ENCODE measurements at regions of chr6 and their contacts with region 1.

Region 1: GRCh38 chr6:160455541-160456213 is 107.5 kb downstream of the SLC22A3 start:
- DNase-seq: peak; percentile 49 to 93
- H3K4me3 ChIP-seq: no peak overlapping the region
- H3K27ac ChIP-seq: no peak overlapping the region
- H3K4me1 ChIP-seq: peaks cover 0 to 3% (median 0%) of the 10 kb centered on the region in 4 experiments; a peak in 2 of 7 replicates
- H3K27me3 ChIP-seq: no peaks in the 10 kb centered on the region
- CTCF ChIP-seq: peak; percentile 89 to 98 (median 98)
- EP300 ChIP-seq: no peak
- POLR2A ChIP-seq: no peak
- RAD21 ChIP-seq: peak; percentile 99 to 100

Region 2: GRCh38 chr6:160088069-160088783 is 367.5 kb before region 1 on chr6:
- CTCF ChIA-PET with region 1: interaction called, 40 read pairs
- POLR2A ChIA-PET with region 1: no interaction called
- DNase-seq: peak in 1 of 2 experiments; percentile 69
- H3K4me3 ChIP-seq: no peak overlapping the region
- H3K27ac ChIP-seq: no peak overlapping the region
- H3K4me1 ChIP-seq: no peaks in the 10 kb centered on the region
- H3K27me3 ChIP-seq: no peaks in the 10 kb centered on the region
- CTCF ChIP-seq: peak; percentile 72 to 80 (median 76)
- EP300 ChIP-seq: no peak
- POLR2A ChIP-seq: no peak
- RAD21 ChIP-seq: peak; percentile 72 to 75

Region 3: DNA sequence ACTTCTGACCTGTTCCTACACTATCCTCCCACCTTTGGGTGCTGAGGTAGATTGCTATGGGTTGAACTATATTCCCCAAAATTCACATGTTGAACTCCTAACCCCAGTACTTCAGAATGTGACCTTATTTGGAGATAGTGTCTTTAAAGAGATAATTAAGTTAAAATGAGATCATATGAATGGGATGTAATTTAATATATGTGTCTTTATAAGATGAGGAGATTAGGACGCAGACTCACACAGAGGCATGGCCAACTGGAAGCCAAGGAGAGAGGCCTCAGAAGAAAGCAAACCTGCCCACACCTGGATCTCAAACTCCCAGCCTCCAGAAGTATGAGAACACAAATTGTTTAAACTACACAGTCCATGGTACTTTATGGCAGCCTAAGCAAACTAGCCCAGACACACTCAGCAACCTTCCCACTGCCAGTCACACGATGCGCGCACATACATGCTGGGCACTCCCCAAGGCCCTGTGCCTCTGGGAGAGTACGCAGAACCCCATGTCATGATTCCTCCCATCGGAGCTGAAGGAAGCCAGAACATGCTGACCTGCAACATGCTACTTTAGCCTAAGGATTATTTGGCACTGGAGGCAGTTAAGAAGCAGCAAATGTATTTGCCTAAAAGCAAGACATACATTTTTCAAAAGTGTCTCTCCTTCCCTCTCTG is 342.9 kb before region 1 on chr6:
- CTCF ChIA-PET with region 1: interaction called, 10 read pairs
- POLR2A ChIA-PET with region 1: no interaction called
- DNase-seq: no peak
- H3K4me3 ChIP-seq: no peak overlapping the region
- H3K27ac ChIP-seq: no peak overlapping the region
- H3K4me1 ChIP-seq: peaks cover 0 to 7% (median 1%) of the 10 kb centered on the region in 4 experiments; a peak in 1 of 7 replicates
- H3K27me3 ChIP-seq: no peaks in the 10 kb centered on the region
- CTCF ChIP-seq: no peak
- EP300 ChIP-seq: no peak
- POLR2A ChIP-seq: no peak
- RAD21 ChIP-seq: no peak

Region 4: GRCh38 chr6:160221423-160221822 is 234.3 kb before region 1 on chr6:
- CTCF ChIA-PET with region 1: interaction called, 27 read pairs
- POLR2A ChIA-PET with region 1: no interaction called
- DNase-seq: no peak
- H3K4me3 ChIP-seq: no peak overlapping the region
- H3K27ac ChIP-seq: no peak overlapping the region
- H3K4me1 ChIP-seq: peaks cover 7 to 18% (median 15%) of the 10 kb centered on the region in 4 experiments; a peak in 4 of 7 replicates
- H3K27me3 ChIP-seq: no peaks in the 10 kb centered on the region
- CTCF ChIP-seq: peak in 2 of 3 experiments; percentile 38 to 54; a peak in 2 of 4 replicates
- EP300 ChIP-seq: no peak
- POLR2A ChIP-seq: no peak
- RAD21 ChIP-seq: peak; percentile 74 to 81

Region 5: DNA sequence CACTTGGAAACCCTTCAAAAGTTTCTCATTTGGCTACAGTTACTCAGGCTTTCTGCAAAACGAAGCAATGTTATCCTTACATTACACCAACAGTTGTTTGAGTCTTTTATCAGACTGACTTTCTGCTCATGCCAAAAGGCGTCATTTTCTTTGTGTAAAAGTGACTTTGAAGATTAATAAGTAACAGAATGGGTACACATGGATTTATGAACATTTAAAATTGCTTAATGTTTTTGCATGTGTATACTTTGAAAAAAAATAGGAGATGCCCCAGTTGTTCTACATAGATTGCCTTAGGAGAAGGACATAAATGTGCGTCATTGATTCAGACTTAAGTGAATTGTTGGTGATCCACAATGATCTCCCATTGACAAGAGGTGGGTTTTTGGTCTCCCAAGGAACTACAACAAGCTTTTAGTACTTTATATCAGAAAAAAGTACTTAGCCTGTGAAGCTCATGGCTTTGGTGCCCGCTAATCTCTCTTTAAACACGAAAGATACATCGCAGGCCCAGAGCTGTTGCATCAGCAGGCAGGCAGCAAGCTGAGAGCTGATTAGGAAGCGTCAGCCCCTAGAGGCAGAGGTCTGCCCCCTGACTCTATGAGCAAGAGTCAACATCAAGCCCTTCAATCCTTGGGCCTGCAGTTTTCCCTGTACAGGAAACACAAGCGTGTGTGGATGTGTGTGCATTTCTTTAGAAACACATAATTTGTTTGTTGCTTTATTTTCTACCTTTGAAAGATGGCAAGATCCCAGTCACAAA is 61.6 kb before region 1 on chr6:
- CTCF ChIA-PET with region 1: interaction called, 10 read pairs
- POLR2A ChIA-PET with region 1: no interaction called
- DNase-seq: peak in 1 of 2 experiments; percentile 54
- H3K4me3 ChIP-seq: no peak overlapping the region
- H3K27ac ChIP-seq: no peak overlapping the region; the same call in 1 of the 2 replicates
- H3K4me1 ChIP-seq: no peaks in the 10 kb centered on the region
- H3K27me3 ChIP-seq: no peaks in the 10 kb centered on the region
- CTCF ChIP-seq: peak in 2 of 3 experiments; percentile 19 to 20; a peak in 2 of 4 replicates
- EP300 ChIP-seq: no peak
- POLR2A ChIP-seq: no peak
- RAD21 ChIP-seq: peak in 1 of 2 experiments; percentile 26; a peak in 1 of 4 replicates

Region 6: GRCh38 chr6:160445130-160445529 is 10.5 kb before region 1 on chr6:
- CTCF ChIA-PET with region 1: interaction called, 17 read pairs
- POLR2A ChIA-PET with region 1: no interaction called
- DNase-seq: no peak
- H3K4me3 ChIP-seq: no peak overlapping the region
- H3K27ac ChIP-seq: no peak overlapping the region
- H3K4me1 ChIP-seq: no peaks in the 10 kb centered on the region
- H3K27me3 ChIP-seq: no peaks in the 10 kb centered on the region; a peak in 1 of 7 replicates
- CTCF ChIP-seq: no peak
- EP300 ChIP-seq: no peak
- POLR2A ChIP-seq: no peak
- RAD21 ChIP-seq: no peak